Ascending aorta (tissue), 2 donors: ENCODE measurements at regions of chr17 and their contacts with region 1.

Region 1: GRCh38 chr17:63621766-63622519 is at the start of gene MAP3K3:
- DNase-seq: peak; percentile 100
- H3K4me3 ChIP-seq: peak within 1 kb of the TSS; percentile 59 to 73
- H3K27ac ChIP-seq: peak within 1 kb of the TSS; percentile 73 to 82
- H3K4me1 ChIP-seq: peaks cover 4 to 26% of the 10 kb centered on the region in 2 donors
- H3K27me3 ChIP-seq: no peaks in the 10 kb centered on the region
- CTCF ChIP-seq: peak in 1 of 3 experiments; percentile 16
- total RNA-seq, gene MAP3K3: 75.6 TPM

Region 2: DNA sequence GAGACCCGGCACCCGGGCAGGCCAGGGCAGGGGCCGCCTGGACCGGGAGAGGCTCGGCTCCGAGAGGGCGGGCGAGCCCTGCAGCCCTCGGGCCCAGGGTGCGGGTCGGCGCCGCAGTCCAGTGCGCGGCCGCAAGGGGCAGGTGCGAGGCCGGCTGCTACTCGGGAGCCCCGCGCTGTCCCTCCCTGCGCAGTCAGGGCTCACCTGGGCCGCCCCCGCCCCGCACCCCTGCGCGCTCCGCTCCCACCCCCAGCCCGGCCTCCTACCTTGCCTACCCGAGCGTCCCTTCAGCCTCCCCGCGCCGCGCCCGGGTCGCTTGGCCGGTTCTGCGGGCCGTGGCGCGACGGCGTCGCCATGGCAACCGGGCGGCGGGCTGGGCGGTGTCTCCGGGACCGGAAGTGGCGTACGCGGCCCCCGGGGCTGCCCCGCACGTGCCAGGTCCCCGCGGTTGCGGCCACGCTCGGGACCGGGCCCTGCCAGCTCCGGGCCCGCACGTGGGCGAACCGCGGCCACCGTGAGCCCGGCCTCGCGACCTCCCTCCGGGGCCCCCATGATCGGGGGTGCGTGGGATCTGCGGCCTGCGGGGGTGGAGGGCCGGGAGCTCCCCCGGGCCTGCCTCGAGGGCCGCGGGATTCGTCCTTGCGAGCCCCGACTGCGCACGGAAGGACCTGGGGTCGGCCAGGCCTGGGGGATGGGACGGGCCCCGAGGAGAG is 175.8 kb before region 1 on chr17 and contains the start of gene CYB561:
- intact Hi-C with region 1: loop called (anchors 5 kb)
- DNase-seq: peak in 1 of 2 donors; percentile 80
- H3K4me3 ChIP-seq: peak within 1 kb of the TSS; percentile 75 to 82
- H3K27ac ChIP-seq: peak within 1 kb of the TSS; percentile 14 to 79
- H3K4me1 ChIP-seq: peaks cover 8 to 9% of the 10 kb centered on the region in 2 donors
- H3K27me3 ChIP-seq: no peaks in the 10 kb centered on the region
- CTCF ChIP-seq: peak in 2 of 3 experiments; percentile 29 to 43
- total RNA-seq, gene CYB561: 23.0 TPM

Region 3: DNA sequence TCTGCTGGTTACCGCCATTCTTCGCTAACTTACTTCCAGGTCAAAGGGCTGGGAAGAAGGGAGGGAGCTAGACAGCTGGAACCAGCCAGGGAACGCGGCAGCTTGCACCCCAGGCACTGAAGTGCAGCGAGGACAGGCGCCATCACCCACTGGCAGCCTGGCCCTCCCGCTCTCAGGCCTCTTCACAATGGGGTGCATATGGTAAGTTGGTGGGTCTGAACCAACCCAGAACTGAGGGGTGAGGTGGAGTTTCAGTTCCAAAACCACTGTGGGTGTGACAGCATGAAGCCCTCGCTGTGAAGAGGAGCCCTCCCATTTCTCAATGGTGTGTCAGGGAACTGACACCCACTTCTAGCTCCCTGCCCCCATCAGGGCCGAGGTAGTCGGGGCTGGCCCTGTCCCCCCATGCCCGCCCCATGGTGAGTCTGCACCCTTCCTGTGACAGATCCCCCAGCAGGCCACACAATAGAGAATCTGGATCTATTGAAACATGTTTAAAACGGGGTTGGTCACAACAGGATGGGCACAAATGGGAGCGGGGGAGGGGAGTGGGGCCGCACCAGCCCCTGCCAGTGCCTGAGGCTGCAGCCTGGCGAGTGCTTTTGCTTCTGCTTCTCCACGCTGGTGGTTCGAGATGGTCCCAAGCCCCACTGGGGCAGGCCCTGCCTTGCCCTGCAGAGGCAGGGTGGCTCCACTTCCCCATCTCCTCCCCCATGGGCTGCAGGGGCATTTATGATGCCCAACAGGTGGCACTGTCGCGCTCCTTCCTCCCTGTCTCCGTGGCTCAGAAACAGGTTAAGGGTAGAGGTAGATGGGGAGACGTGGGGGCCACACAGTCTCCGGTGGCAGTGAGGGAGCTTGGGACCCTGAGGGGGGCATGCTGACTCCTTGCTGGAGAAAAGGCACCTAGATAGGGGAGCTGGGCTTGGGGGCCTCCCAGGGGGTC is 75.7 kb after region 1 on chr17:
- intact Hi-C with region 1: loop called (anchors 2 kb)
- DNase-seq: peak in 1 of 2 donors; percentile 76
- H3K4me3 ChIP-seq: peak overlapping the region in 1 of 2 donors; percentile 73
- H3K27ac ChIP-seq: peak overlapping the region; percentile 54 to 80
- H3K4me1 ChIP-seq: peaks cover 6 to 9% of the 10 kb centered on the region in 2 donors
- H3K27me3 ChIP-seq: no peaks in the 10 kb centered on the region
- CTCF ChIP-seq: peak in 2 of 3 experiments; percentile 45

Region 4: GRCh38 chr17:63773381-63774140 is 151.6 kb after region 1 on chr17 and contains the start of gene CCDC47:
- intact Hi-C with region 1: loop called (anchors 2 kb)
- DNase-seq: peak; percentile 96 to 99
- H3K4me3 ChIP-seq: peak within 1 kb of the TSS; percentile 89 to 97
- H3K27ac ChIP-seq: peak within 1 kb of the TSS; percentile 97 to 98
- H3K4me1 ChIP-seq: peaks cover 4 to 25% of the 10 kb centered on the region in 2 donors
- H3K27me3 ChIP-seq: no peaks in the 10 kb centered on the region
- CTCF ChIP-seq: no peak
- total RNA-seq, gene CCDC47: 76.2 TPM